Aorta (tissue), 5 donors: ENCODE measurements at regions of chr5 and their contacts with region 1.

Region 1: DNA sequence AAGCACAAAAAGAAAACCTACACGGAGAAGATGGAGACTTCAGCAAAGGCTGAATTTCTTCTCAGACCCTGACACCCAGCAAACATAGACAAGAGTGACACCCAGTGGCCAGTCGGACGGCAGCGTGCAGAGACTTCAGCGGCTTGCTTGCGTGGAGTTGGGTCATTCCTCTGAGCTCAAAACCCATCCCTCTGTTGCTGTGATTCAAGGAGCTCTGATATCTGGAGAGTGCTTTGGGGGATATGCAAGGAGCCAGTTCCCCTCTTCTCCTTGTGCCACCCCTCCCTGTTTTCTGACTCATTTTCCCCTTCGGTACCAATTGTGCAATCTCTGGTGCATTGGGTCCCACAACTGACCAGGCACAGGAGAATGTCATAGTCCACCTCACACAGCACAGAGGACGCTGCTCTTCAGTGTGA is 27.5 kb downstream of the SH3TC2 start:
- DNase-seq: peak; percentile 77 to 87
- ATAC-seq: peak; percentile 84
- H3K4me3 ChIP-seq: no peak overlapping the region
- H3K27ac ChIP-seq: no peak overlapping the region
- H3K4me1 ChIP-seq: no peaks in the 10 kb centered on the region
- H3K27me3 ChIP-seq: no peaks in the 10 kb centered on the region

Region 2: GRCh38 chr5:148759101-148759500 is 276.3 kb before region 1 on chr5:
- intact Hi-C with region 1: no loop called
- DNase-seq: no peak
- ATAC-seq: no peak
- H3K4me3 ChIP-seq: no peak overlapping the region
- H3K27ac ChIP-seq: no peak overlapping the region
- H3K4me1 ChIP-seq: no peaks in the 10 kb centered on the region
- H3K27me3 ChIP-seq: no peaks in the 10 kb centered on the region

Region 3: DNA sequence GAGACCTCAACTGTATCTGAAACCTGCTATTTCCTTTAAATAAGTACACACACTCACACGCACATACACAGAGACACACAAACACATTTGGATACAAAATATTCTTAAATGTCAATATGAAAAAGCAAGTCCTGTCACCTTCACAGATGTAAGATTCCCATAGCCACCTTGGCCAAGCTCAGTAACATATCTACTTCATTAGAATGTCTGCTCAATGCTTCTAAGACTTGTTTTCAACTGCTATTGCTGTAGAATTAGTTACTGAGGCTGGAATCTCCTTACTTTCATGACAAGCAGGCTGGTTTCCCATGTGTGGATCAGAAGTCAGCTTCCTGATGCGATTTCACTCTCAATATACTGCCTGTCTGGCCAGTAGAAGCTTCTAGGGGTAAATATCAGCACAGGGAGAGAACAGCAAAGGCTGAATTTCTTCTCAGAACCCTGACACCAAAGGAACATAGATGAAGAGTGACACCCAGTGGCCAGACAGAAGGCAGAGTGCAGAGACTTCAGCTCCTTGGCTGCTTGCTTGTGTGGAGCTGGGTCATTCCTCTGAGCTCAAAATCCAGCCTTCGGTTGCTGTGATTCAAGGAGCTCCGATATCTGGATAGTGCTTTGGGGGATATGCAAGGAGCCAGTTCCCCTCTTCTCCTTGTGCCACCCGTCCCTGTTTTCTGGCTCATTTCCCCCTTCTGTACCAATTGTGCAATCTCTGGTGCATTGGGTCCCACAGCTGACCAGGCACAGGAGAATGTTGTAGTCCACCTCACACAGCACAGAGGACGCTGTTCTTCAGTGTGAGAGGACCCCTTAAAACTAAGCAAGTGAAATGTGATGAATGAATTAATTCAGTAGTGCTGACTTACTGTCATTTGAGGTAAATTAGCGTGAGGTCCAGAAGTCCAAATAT is 79.3 kb after region 1 on chr5:
- intact Hi-C with region 1: loop called in 1 of 2 experiments (anchors 10 kb)
- DNase-seq: peak in 1 of 2 donors; percentile 62
- ATAC-seq: peak; percentile 87
- H3K4me3 ChIP-seq: no peak overlapping the region
- H3K27ac ChIP-seq: no peak overlapping the region
- H3K4me1 ChIP-seq: no peaks in the 10 kb centered on the region
- H3K27me3 ChIP-seq: no peaks in the 10 kb centered on the region